Activated CD4-positive, alpha-beta memory T cell treated with anti-CD3 and anti-CD28 coated beads, Interleukin-2, amount 10 ng/mL, durations not matched to agents 7 days and 5 days (primary cell): ENCODE measurements at regions of chr11 and their contacts with region 1.

Region 1: GRCh38 chr11:9137293-9138132 is 46.1 kb upstream of the SCUBE2 start:
- DNase-seq: peak; percentile 78
- H3K4me3 Mint-ChIP-seq: no peak overlapping the region
- H3K27ac Mint-ChIP-seq: no peak overlapping the region
- H3K4me1 Mint-ChIP-seq: peaks cover 36% of the 10 kb centered on the region
- H3K27me3 Mint-ChIP-seq: no peaks in the 10 kb centered on the region

Region 2: DNA sequence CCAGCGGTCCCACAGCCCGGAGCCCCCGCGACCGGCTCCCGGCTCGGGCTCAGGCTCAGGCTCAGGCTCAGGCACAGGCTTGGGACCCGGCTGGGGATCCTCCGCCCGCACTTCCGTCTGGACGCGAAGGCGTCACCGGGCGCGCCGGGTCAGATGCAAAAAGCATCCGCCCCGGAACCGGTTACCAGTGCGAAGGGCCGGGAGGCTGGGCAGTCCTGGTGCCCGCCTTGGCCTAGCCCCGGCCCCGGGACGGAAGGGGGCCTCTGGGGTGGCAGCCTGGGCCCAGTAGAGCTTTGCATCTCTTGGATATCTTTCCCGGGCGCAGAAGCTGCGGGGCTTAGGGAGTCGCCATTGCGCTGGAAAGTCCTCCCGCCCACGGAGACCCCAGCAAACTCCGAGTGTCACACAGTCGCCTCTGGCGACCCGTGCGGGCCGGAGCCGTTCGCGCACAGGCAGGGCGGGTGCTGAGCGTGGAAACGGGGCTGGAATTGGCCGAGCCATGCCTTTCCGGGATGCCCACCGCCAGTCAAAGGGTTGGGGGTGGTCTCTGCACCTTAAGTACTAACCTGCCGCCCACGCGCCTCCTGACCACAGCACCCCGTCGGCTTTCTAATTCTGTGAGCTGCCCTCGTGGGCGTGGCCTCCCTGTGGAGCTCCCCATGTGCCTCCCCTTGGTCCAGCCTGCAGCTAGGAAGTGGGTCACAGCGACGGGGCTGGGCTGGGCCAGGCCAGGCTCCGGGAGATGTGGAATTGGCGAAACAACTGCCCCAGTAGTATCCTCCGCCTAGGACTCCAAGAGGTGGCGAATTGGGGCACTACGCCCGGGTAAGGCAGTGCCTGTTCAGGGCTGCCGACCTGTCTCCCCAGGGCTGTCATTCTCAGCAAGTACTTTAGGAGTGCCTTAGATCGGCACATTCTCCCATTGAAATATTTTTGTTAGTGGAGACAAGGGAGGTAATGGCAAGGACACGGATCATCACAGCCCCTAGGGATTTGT is 172.9 kb before region 1 on chr11 and contains the start of gene TMEM9B:
- CTCF ChIA-PET with region 1: interaction called, 22 read pairs
- POLR2A ChIA-PET with region 1: interaction called, 6 read pairs
- DNase-seq: peak; percentile 88
- H3K4me3 Mint-ChIP-seq: peak within 1 kb of the TSS; percentile 88
- H3K27ac Mint-ChIP-seq: peak within 1 kb of the TSS; percentile 91
- H3K4me1 Mint-ChIP-seq: peaks cover 32% of the 10 kb centered on the region
- H3K27me3 Mint-ChIP-seq: no peaks in the 10 kb centered on the region
- total RNA-seq, gene TMEM9B: 34.2 to 34.8 TPM

Region 3: DNA sequence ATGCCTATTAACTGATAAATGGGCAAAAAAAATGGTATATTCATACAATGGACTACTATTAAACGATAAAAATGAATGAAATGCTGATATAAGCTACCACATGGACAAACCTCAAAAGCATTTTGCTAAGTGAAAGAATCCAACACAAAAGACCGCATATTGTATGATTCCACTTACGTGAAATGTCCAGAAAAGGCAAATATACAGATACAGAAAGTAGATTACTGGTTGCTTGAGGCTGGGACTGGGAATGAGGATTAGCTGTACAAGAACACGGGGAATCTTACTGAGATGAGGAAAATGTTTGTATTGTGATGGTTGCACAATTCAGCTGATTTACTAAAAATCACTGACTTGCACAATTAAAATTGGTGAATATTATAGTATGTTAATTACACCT is 54.9 kb before region 1 on chr11:
- CTCF ChIA-PET with region 1: no interaction called
- POLR2A ChIA-PET with region 1: no interaction called
- DNase-seq: no peak
- H3K4me3 Mint-ChIP-seq: no peak overlapping the region
- H3K27ac Mint-ChIP-seq: no peak overlapping the region
- H3K4me1 Mint-ChIP-seq: peaks cover 3% of the 10 kb centered on the region
- H3K27me3 Mint-ChIP-seq: peaks cover 35% of the 10 kb centered on the region

Region 4: GRCh38 chr11:9092853-9093778 is 44.4 kb before region 1 on chr11:
- CTCF ChIA-PET with region 1: interaction called, 34 read pairs
- POLR2A ChIA-PET with region 1: no interaction called
- DNase-seq: no peak
- H3K4me3 Mint-ChIP-seq: no peak overlapping the region
- H3K27ac Mint-ChIP-seq: no peak overlapping the region
- H3K4me1 Mint-ChIP-seq: peaks cover 8% of the 10 kb centered on the region
- H3K27me3 Mint-ChIP-seq: peaks cover 54% of the 10 kb centered on the region

Region 5: DNA sequence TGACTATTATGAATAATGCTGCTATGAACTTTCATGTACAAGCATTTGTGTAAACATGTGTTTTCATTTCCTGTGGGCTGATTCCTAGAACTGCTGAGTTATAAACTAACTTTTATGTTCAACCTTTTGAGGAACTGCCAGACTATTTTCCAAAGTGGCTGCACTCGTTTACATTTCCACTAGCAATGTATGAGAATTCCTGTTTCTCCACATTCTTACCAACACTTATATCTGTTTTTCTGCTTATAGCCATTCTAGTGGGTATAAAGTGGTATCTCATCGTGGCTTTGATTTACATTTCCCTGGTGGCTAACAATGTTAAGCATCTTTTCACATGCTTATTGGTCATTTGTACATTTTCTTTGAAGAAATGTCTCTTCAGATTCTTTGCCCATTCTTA is 10.9 kb before region 1 on chr11:
- CTCF ChIA-PET with region 1: interaction called, 22 read pairs
- POLR2A ChIA-PET with region 1: no interaction called
- DNase-seq: no peak
- H3K4me3 Mint-ChIP-seq: no peak overlapping the region
- H3K27ac Mint-ChIP-seq: no peak overlapping the region
- H3K4me1 Mint-ChIP-seq: peaks cover 14% of the 10 kb centered on the region
- H3K27me3 Mint-ChIP-seq: peaks cover 3% of the 10 kb centered on the region

Region 6: GRCh38 chr11:9170450-9170849 is 32.9 kb after region 1 on chr11:
- CTCF ChIA-PET with region 1: interaction called, 10 read pairs
- POLR2A ChIA-PET with region 1: no interaction called
- DNase-seq: no peak
- H3K4me3 Mint-ChIP-seq: no peak overlapping the region
- H3K27ac Mint-ChIP-seq: no peak overlapping the region
- H3K4me1 Mint-ChIP-seq: peaks cover 16% of the 10 kb centered on the region
- H3K27me3 Mint-ChIP-seq: no peaks in the 10 kb centered on the region

Region 7: DNA sequence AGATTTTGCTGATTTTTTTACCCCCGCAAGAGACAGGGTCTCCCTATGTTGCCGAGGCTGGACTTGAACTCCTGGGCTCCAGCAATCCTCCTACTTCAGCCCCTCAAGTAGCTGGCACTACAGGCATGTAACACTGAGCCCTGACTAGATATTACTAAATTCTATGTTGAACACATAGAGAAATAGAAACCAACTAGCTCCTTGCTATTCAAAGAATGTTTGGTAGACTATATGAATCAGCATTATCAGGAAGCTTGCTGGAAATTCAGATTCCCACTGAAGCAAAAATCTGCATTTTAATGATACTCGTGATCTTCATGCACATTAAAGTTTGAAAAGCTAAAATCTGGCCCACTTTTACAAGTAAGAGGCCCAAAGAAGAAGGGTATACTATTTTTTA is 164.9 kb after region 1 on chr11:
- CTCF ChIA-PET with region 1: no interaction called
- POLR2A ChIA-PET with region 1: no interaction called
- DNase-seq: no peak
- H3K4me3 Mint-ChIP-seq: no peak overlapping the region
- H3K27ac Mint-ChIP-seq: no peak overlapping the region
- H3K4me1 Mint-ChIP-seq: peaks cover 2% of the 10 kb centered on the region
- H3K27me3 Mint-ChIP-seq: no peaks in the 10 kb centered on the region